Activated CD4-positive, alpha-beta memory T cell treated with anti-CD3 and anti-CD28 coated beads for 36 hours (primary cell): ENCODE measurements at regions of chr7 and their contacts with region 1.

Region 1: DNA sequence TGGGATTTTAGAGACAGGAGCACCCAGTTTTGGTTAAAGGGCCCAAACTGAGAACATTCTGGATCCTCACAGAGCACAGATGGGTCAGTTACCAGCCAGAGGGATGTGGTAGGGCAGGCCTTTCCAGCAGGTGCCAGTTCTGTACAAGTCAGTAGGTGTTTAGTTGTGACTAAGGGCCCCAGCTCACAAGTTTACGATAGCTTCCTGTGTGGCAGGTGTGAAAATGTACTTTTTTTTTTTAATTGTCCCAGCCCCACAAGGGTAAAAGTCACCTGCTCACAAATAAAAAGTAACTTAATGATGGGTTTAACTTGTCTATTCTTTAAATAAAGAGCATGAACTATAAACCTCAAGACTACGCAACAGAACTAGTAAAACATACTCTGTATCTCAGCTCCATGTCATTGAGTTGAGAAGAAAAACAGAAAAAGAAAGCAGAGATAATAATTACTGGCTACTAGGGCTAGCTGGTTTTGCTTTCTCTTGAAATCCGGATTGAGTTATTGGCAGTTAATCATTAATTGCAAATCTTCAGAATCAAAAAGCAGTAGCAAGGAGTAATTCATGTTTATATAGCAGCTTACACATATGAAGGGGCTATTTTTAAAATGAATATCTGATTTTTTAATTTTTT is 15.4 kb downstream of the NFE2L3 start:
- DNase-seq: peak; percentile 65
- H3K4me3 Mint-ChIP-seq: peak overlapping the region; percentile 11
- H3K27ac Mint-ChIP-seq: peak overlapping the region; percentile 94
- H3K4me1 Mint-ChIP-seq: peaks cover 48% of the 10 kb centered on the region
- H3K27me3 Mint-ChIP-seq: no peaks in the 10 kb centered on the region

Region 2: DNA sequence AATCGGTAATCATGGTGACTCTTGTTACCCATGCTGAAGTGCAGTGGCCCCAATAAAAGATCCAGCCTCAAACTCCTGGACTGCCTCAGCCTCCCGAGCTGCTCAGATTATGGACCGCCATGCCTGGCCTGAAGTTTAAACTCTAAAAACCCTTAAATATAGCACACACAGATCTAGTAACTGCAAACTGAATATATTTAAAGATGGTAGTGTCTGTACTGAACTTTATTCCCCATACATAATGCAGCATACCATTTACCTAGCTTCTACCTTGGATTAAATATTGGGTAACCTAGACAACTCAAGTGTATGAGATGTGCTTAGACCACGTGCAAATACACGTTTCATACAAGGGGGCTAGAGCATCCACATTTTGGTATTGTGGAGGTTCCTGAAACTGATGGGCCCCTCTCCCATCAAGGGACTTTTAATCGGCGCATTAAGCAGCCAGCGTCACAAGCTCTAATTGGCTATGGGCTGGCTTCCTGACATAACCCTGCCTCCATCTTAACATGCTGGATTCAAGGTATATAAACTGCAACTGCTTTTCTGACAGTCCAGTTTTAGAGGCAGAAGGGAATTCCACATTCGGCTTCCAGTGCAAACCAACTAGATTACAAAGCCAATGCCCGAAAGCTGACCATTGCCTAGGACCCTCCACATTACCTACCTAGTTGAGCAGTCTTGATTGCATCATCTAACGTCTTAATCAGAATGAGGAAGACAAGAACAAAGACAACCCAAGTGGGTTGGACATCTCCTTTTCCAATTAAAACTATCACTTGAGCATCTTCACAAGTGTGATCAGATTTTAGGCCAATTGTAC is 20.2 kb after region 1 on chr7:
- CTCF ChIA-PET with region 1: interaction called, 4 read pairs
- POLR2A ChIA-PET with region 1: interaction called, 16 read pairs
- intact Hi-C with region 1: loop called (anchors 1 kb)
- DNase-seq: no peak
- H3K4me3 Mint-ChIP-seq: peak overlapping the region; percentile 10
- H3K27ac Mint-ChIP-seq: peak overlapping the region; percentile 81
- H3K4me1 Mint-ChIP-seq: peaks cover 70% of the 10 kb centered on the region
- H3K27me3 Mint-ChIP-seq: no peaks in the 10 kb centered on the region

Region 3: DNA sequence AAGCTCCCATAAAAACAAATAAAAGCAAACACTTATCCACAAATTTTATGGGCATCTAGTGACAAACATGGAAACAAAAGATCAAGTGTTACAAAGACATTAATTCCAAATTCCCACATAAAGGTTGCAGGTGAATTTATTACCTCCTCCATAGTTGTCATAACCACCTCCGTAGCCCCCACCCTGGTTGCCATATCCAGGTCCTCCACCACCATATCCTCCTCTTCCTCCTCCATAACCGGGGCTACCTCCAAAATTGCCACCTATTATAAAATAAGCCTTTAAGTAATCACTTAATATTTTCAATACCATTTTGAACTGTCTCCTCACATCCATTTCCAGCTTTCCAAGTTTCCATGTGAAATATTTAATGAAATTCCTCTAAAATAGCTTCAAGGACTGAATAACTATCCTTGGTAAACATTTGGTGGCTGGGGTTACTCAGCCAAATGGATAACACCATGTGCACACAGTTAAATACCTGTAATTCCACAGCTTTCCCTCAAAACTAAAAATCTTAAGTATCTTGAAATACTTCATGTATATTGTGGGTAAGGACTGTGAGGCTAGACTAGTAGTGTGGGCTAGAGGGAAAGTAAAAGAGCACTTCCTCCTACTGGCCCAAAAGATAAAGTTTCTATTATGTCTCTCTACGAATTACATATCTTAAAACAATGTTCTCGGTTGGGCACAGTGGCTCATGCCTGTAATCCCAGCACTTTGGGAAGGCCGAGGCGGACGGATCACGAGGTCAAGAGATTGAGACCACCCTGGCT is 26.2 kb after region 1 on chr7:
- CTCF ChIA-PET with region 1: interaction called, 4 read pairs
- POLR2A ChIA-PET with region 1: interaction called, 16 read pairs
- intact Hi-C with region 1: loop called (anchors 1 kb)
- DNase-seq: no peak
- H3K4me3 Mint-ChIP-seq: peak overlapping the region; percentile 69
- H3K27ac Mint-ChIP-seq: peak overlapping the region; percentile 84
- H3K4me1 Mint-ChIP-seq: peaks cover 80% of the 10 kb centered on the region
- H3K27me3 Mint-ChIP-seq: no peaks in the 10 kb centered on the region